Thyroid gland (tissue), 4 donors: ENCODE measurements at regions of chr1 and their contacts with region 1.

Region 1: DNA sequence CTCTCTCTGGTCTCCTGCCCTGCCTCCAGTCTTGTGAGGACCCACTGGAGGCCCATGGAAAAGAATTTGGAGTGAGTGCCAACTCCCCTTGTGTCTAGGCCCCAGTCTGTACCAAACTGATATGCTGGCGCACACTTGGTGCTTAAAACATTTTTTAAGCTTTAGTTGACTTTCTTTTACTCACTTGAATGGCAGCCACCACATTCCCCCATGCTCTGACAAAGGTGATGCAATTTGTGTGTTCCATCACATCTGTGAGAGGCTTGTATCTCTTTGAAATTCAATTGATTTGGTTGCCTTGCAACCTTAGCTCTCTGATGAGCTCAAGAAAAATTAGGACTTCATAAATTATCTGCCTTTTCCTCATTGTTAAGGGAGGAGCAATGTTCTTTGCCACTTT is 30.5 kb upstream of the WDTC1 start:
- DNase-seq: no peak
- H3K4me3 ChIP-seq: no peak overlapping the region
- H3K27ac ChIP-seq: no peak overlapping the region
- H3K4me1 ChIP-seq: no peaks in the 10 kb centered on the region
- H3K27me3 ChIP-seq: no peaks in the 10 kb centered on the region
- CTCF ChIP-seq: no peak
- POLR2A ChIP-seq: no peak

Region 2: GRCh38 chr1:26695356-26696118 is 508.4 kb before region 1 on chr1 and contains the start of gene ARID1A:
- intact Hi-C with region 1: no loop called
- DNase-seq: peak; percentile 94 to 97
- H3K4me3 ChIP-seq: peak within 1 kb of the TSS; percentile 56 to 99 (median 68)
- H3K27ac ChIP-seq: peak within 1 kb of the TSS; percentile 86 to 97 (median 94)
- H3K4me1 ChIP-seq: peaks cover 49 to 57% of the 10 kb centered on the region in 2 donors
- H3K27me3 ChIP-seq: no peaks in the 10 kb centered on the region
- CTCF ChIP-seq: no peak
- POLR2A ChIP-seq: peak; percentile 62 to 87
- total RNA-seq, gene ARID1A: 44.1 to 97.3 (median 78.4) TPM

Region 3: GRCh38 chr1:27284425-27285273 is 80.7 kb after region 1 on chr1:
- intact Hi-C with region 1: loop called (anchors 5 kb)
- DNase-seq: peak; percentile 81 to 86
- H3K4me3 ChIP-seq: no peak overlapping the region
- H3K27ac ChIP-seq: no peak overlapping the region
- H3K4me1 ChIP-seq: no peaks in the 10 kb centered on the region
- H3K27me3 ChIP-seq: no peaks in the 10 kb centered on the region
- CTCF ChIP-seq: peak; percentile 63 to 77 (median 68)
- POLR2A ChIP-seq: no peak

Region 4: GRCh38 chr1:27489910-27490741 is 286.2 kb after region 1 on chr1 and contains the start of gene WASF2:
- intact Hi-C with region 1: no loop called
- DNase-seq: peak; percentile 97 to 98
- H3K4me3 ChIP-seq: peak within 1 kb of the TSS; percentile 54 to 95 (median 88)
- H3K27ac ChIP-seq: peak within 1 kb of the TSS; percentile 95 to 99 (median 98)
- H3K4me1 ChIP-seq: peaks cover 18 to 41% of the 10 kb centered on the region in 2 donors
- H3K27me3 ChIP-seq: no peaks in the 10 kb centered on the region
- CTCF ChIP-seq: peak in 2 of 6 experiments; percentile 24 to 26
- POLR2A ChIP-seq: peak; percentile 85 to 96
- total RNA-seq, gene WASF2: 38.3 to 47.7 (median 46.7) TPM